WTC11 (cell line): ENCODE measurements at regions of chr19 and their contacts with region 1.

Region 1: DNA sequence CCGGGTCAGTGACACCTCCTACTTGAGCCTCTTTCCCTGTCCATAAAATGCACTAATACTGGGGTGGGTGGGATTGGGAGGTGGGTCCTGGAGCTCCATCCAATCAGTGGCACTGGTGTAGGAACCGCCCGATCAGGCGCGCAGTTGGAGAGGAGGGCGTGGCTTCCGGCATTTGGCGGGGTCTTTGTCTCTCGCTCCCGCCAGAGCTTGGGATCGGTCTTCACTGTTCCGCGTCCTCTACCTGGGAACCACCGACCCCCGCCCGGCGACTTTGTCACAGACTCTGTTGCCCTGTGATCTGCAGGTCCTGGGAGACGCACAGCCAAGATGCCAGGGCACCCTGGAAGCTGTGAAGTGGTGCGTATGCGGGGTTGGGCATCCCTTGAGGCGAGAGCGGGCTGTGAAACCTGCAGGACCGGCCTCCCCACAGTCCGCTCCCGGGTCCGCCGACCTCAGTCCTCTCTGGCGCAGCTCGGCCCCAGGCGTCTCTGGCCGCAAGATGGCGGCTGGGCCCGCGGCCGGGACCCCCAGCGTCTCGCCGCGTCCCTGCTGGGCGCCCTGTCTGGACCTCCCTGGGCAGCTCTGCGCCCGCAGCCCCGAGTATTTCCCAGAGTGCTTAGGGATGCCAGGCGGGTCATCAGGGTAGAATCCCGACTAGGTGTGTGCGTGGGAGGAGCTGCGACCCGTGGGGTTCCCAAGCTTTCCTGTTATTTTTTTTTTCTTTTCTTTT is 41.6 kb upstream of the ZNF730 start:
- DNase-seq: peak; percentile 92
- ATAC-seq: peak; percentile 92
- H3K4me3 Mint-ChIP-seq: peak overlapping the region; percentile 83
- H3K27ac Mint-ChIP-seq: peak overlapping the region; percentile 91
- H3K4me1 Mint-ChIP-seq: peaks cover 30% of the 10 kb centered on the region
- H3K27me3 Mint-ChIP-seq: peaks cover 11% of the 10 kb centered on the region
- CTCF ChIP-seq: no peak

Region 2: DNA sequence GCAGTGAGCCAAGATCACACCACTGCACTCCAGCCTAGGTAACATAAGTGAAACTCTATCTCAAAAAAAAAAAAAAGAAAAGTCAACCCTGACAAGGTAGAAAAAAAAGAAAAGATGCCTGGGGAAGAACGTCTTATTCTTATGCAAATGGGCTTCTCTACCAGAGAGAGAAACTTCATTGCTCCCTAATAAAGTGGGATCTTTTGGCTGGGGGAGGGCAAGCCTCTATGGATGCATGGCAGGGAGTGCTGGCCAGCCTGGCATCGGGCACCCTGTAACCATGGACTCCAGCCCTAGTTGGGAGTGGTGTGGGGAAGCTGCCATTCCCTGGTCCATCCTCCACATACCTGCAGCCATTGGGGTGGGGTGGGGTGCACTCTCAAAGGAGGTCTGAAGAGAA is 41.5 kb before region 1 on chr19:
- CTCF ChIA-PET with region 1: no interaction called
- POLR2A ChIA-PET with region 1: no interaction called
- DNase-seq: no peak
- ATAC-seq: no peak
- H3K4me3 Mint-ChIP-seq: no peak overlapping the region
- H3K27ac Mint-ChIP-seq: no peak overlapping the region
- H3K4me1 Mint-ChIP-seq: peaks cover 21% of the 10 kb centered on the region
- H3K27me3 Mint-ChIP-seq: peaks cover 7% of the 10 kb centered on the region
- CTCF ChIP-seq: no peak

Region 3: DNA sequence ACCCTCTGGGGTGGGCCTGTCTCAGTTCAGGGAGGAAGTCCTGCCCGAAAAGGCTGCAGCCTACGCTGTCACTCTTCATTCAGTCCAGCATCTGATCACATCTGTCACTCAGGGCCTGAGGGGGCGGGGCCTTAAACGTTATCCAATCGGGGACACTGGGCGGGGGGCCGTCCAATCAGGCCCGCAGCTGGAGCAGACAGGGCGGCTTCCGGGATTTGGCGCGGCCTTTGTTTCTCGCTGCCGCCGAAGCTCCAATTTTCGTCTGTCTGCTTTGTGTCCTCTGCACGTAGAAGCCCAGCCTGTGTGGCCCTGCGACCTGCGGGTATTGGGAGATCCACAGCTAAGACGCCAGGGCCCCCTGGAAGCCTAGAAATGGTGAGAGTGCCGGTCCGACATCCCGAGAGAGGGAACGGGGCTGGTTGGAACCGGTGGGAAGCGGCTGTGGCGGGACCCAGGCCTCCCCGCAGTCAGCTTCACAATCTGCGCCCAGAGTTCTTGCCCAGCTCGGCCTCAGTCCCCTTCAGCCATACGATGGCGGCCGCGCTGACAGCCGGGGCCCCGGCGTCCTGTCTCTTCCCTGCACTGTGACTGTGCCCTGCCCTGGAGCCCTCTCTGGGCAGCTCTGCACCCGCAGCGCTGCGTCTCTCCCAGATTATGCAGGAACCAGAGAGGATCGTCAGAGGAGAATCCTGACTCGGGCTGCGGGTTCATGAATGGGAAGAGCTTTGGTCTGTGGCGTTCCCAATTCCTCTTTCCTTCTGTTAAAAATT is 41.8 kb after region 1 on chr19 and contains the start of gene ZNF730:
- CTCF ChIA-PET with region 1: interaction called, 3 read pairs
- POLR2A ChIA-PET with region 1: interaction called, 29 read pairs
- DNase-seq: peak; percentile 84
- ATAC-seq: peak; percentile 88
- H3K4me3 Mint-ChIP-seq: peak within 1 kb of the TSS; percentile 90
- H3K27ac Mint-ChIP-seq: peak within 1 kb of the TSS; percentile 99
- H3K4me1 Mint-ChIP-seq: peaks cover 24% of the 10 kb centered on the region
- H3K27me3 Mint-ChIP-seq: no peaks in the 10 kb centered on the region
- CTCF ChIP-seq: no peak
- total RNA-seq, gene ZNF730: 32.2 to 38.0 TPM (median 32.6 TPM) in 3 replicates